OCI-LY7 (cell line): ENCODE measurements at regions of chr22 and their contacts with region 1.

Region 1: GRCh38 chr22:50053861-50054260 is 4.2 kb downstream of the TTLL8 start:
- DNase-seq: peak; percentile 85
- H3K4me3 ChIP-seq: peak overlapping the region; percentile 7
- H3K27ac ChIP-seq: peak overlapping the region; percentile 86
- H3K4me1 ChIP-seq: peaks cover 42% of the 10 kb centered on the region
- CTCF ChIP-seq: no peak

Region 2: GRCh38 chr22:49753961-49754695 is 299.7 kb before region 1 on chr22:
- CTCF ChIA-PET with region 1: no interaction called
- POLR2A ChIA-PET with region 1: no interaction called
- intact Hi-C with region 1: no loop called
- DNase-seq: no peak
- H3K4me3 ChIP-seq: no peak overlapping the region
- H3K27ac ChIP-seq: no peak overlapping the region
- H3K4me1 ChIP-seq: no peaks in the 10 kb centered on the region
- CTCF ChIP-seq: no peak

Region 3: DNA sequence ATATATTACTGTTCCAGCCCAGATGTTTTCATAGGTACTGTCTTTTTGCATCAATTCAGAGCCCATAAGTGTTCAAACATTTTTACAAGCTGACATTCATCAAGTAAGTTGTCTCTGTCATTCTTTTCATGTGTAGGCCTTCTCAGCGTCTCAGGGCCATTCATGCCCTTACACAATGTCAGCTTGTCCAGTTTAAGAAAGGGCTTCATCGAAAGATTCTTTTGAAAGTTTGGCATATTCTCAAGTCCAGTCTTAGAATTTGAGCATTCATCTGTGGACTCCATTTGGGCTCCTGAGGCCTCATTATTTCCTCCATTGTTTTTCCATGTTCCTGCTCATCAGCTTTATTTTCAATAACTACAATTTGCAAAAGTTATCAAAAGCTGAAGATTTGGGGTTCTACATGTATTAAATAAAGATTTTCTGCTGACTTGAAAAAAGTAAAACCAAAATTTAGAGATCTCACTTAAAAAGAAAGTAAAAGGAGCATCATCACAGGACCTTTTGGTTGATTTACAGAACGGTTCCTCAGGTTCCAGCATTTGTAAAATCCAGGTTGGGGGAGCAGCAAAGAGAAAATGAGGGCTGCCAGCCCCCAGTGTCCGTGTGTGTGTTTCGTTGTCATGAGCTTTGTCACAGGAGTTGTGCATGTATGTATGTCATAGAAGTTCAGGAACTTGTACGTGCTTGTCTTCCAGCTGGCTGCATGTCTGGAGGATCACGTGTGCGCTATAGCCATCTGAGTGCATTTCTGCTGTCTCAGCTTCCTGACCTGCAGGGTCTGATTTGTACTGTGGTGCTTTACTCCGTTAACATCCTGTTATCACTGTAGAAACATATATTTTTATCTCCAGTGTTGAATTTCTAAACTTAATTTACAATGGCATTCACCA is 51.6 kb after region 1 on chr22:
- CTCF ChIA-PET with region 1: no interaction called
- POLR2A ChIA-PET with region 1: interaction called, 3 read pairs
- intact Hi-C with region 1: loop called (anchors 2 kb)
- DNase-seq: peak; percentile 81
- H3K4me3 ChIP-seq: peak overlapping the region; percentile 48
- H3K27ac ChIP-seq: peak overlapping the region; percentile 51
- H3K4me1 ChIP-seq: peaks cover 60% of the 10 kb centered on the region
- CTCF ChIP-seq: no peak